Heart left ventricle (tissue), 16 donors: ENCODE measurements at regions of chr2 and their contacts with region 1.

Region 1: DNA sequence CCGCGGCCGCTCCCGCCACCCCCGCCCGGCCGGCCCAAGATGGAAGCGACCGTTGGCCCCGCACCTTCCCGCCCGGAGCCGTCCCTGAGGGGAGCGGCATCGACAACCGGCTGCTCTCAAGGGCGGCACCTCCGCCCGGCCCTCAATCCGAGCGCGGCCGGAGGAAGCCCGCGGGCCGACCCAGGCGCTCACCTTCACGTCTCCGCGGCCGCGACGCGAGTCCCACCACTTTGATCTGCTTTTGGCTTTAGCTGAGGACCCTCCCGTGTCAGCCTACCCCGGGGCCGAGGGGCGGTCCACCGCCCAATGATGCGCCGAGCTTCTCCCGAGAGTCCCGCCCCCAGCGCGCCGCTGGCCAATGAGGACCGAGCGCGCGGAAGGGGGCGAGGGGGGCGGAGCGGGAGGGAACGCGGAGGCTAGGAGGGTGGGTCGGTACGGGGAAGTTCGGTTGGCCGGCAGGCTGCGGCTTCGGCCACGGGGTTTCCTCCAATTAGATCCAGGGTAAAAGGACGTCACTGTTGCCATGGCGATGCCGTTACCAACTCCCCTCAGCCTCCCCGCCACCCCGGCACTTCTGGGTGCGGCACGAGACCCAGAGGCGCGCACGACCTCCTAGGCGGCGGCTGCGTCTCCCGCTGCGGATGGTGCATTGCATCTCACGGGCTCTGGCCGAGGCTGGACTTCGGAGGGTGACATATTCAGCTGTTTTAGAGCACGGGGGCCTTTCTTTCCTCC is at the start of gene YWHAQ:
- DNase-seq: peak; percentile 99
- ATAC-seq: peak; percentile 95 to 98 (median 96)
- H3K4me3 ChIP-seq: peak within 1 kb of the TSS; percentile 41 to 94 (median 79)
- H3K27ac ChIP-seq: peak within 1 kb of the TSS; percentile 72 to 99 (median 96)
- H3K4me1 ChIP-seq: peaks cover 0 to 60% (median 49%) of the 10 kb centered on the region in 12 donors
- H3K27me3 ChIP-seq: no peaks in the 10 kb centered on the region
- CTCF ChIP-seq: no peak
- POLR2A ChIP-seq: peak; percentile 89 to 98
- total RNA-seq, gene YWHAQ: 169 to 310 (median 213) TPM

Region 2: DNA sequence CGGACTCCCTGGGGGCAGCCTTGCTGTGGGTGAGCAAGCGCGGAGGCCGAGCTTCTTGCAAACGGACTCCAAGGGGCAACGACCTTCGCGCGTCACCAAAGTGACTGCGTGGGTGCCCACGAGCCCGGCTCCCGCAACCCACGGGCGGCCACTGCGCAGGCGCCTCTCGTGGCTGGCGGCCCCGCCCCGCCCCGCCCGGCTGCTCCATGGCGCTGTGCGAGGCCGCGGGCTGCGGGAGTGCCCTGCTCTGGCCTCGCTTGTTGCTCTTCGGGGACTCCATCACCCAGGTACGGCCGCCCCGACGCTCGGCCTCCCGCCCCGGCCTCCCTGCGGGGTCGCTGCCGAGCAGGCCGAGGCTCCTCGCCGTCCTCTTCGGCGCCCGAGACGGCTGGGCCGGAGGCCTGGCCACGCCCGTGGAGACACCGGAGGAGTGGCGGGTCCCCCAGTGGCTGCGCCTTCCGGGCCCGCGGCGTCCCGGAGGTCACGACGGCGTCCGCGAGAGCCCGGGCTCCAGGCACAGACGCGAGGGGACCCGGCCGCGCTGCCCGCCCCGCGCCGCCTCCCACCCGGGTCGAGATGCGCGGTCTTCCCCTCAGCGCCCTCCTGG is 156.5 kb before region 1 on chr2 and contains the start of gene IAH1:
- intact Hi-C with region 1: loop called in 1 of 10 experiments (anchors 10 kb)
- DNase-seq: peak; percentile 60 to 86 (median 75)
- ATAC-seq: peak; percentile 57 to 93 (median 82)
- H3K4me3 ChIP-seq: peak within 1 kb of the TSS; percentile 59 to 93 (median 82)
- H3K27ac ChIP-seq: peak within 1 kb of the TSS; percentile 52 to 93 (median 84)
- H3K4me1 ChIP-seq: peaks cover 0 to 42% (median 32%) of the 10 kb centered on the region in 12 donors
- H3K27me3 ChIP-seq: no peaks in the 10 kb centered on the region
- CTCF ChIP-seq: peak in 2 of 12 donors; percentile 11 to 12
- POLR2A ChIP-seq: peak in 1 of 2 donors; percentile 65
- total RNA-seq, gene IAH1: 58.4 to 101 (median 78.0) TPM

Region 3: DNA sequence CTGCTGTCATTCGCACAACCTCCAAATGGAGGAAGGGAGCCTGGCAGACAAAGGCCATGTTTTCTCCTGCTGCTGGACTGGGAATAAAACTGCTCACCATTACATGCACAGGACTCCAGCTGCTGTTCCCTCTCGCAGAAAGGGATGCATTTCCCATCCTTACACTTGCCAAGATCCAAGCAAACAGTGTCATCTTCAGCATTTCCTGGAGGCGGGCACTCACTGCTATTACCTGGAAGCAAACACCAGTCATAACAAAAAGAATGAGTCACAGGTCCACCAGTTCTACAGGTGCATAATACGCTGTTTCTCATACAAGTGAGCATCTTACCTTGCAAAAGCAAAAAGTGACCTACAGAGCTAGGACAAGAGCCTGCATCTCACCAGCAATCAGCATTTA is 133.9 kb before region 1 on chr2:
- intact Hi-C with region 1: no loop called
- DNase-seq: no peak
- ATAC-seq: no peak
- H3K4me3 ChIP-seq: no peak overlapping the region
- H3K27ac ChIP-seq: no peak overlapping the region
- H3K4me1 ChIP-seq: peaks cover 0 to 8% (median 2%) of the 10 kb centered on the region in 12 donors
- H3K27me3 ChIP-seq: no peaks in the 10 kb centered on the region
- CTCF ChIP-seq: no peak
- POLR2A ChIP-seq: no peak

Region 4: GRCh38 chr2:9594366-9595054 is 36.4 kb before region 1 on chr2:
- intact Hi-C with region 1: no loop called
- DNase-seq: no peak
- ATAC-seq: peak; percentile 63 to 94 (median 92)
- H3K4me3 ChIP-seq: no peak overlapping the region
- H3K27ac ChIP-seq: peak overlapping the region in 5 of 12 donors; percentile 10 to 65 (median 25)
- H3K4me1 ChIP-seq: peaks cover 0 to 49% (median 38%) of the 10 kb centered on the region in 12 donors
- H3K27me3 ChIP-seq: no peaks in the 10 kb centered on the region
- CTCF ChIP-seq: no peak
- POLR2A ChIP-seq: no peak

Region 5: DNA sequence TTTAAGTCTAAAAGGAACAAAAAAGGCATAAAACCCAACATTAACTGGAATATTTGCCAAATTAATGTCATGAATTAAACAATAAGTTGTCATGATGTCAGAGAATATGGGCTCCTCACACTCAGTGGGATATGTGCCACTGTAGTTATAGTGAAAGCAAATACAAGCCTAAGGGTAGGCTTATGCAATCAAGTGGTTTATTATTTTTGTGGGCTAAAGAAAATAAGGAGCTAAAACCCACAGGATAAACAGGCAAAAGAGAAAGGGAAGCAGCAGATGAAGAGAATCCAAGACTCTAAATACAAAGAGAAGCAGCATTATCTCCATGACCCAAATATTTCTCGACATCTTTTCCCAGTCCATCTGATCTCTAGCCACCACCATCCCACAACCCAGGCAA is 17.6 kb before region 1 on chr2:
- intact Hi-C with region 1: loop called in 1 of 10 experiments (anchors 2 kb)
- DNase-seq: no peak
- ATAC-seq: peak in 3 of 4 donors; percentile 29 to 44 (median 31)
- H3K4me3 ChIP-seq: no peak overlapping the region
- H3K27ac ChIP-seq: peak overlapping the region in 2 of 12 donors; percentile 31 to 41
- H3K4me1 ChIP-seq: peaks cover 0 to 92% (median 70%) of the 10 kb centered on the region in 12 donors
- H3K27me3 ChIP-seq: no peaks in the 10 kb centered on the region
- CTCF ChIP-seq: no peak
- POLR2A ChIP-seq: no peak

Region 6: DNA sequence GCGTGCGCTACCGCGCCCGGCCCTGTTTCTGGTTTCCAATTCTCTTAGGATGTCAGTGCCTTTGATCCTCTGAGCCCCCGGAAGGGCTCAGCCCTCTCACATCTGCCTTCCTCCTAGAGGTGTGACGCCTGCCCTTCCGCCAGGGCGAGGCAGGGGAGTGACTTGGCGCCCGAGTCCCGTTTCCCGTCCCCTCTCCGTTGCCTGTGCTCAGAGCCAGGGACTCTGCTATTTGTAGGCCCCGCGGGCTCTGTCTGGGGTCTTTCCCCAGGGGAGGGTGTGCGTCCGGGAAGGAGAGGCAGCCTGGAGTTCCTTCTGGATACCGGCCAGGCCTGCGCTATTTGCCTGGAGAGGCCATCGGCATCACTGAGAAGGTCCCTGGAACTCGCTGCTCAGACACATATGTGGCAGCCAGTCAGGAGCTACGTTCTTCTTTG is 108.6 kb after region 1 on chr2:
- intact Hi-C with region 1: loop called in 2 of 10 experiments (anchors 2 to 5 kb)
- DNase-seq: peak; percentile 90 to 93 (median 90)
- ATAC-seq: peak; percentile 71 to 94 (median 86)
- H3K4me3 ChIP-seq: peak overlapping the region in 10 of 12 donors; percentile 23 to 53 (median 44)
- H3K27ac ChIP-seq: peak overlapping the region; percentile 35 to 94 (median 86)
- H3K4me1 ChIP-seq: peaks cover 0 to 33% (median 24%) of the 10 kb centered on the region in 12 donors
- H3K27me3 ChIP-seq: no peaks in the 10 kb centered on the region
- CTCF ChIP-seq: peak in 1 of 12 donors; percentile 8
- POLR2A ChIP-seq: no peak

Region 7: DNA sequence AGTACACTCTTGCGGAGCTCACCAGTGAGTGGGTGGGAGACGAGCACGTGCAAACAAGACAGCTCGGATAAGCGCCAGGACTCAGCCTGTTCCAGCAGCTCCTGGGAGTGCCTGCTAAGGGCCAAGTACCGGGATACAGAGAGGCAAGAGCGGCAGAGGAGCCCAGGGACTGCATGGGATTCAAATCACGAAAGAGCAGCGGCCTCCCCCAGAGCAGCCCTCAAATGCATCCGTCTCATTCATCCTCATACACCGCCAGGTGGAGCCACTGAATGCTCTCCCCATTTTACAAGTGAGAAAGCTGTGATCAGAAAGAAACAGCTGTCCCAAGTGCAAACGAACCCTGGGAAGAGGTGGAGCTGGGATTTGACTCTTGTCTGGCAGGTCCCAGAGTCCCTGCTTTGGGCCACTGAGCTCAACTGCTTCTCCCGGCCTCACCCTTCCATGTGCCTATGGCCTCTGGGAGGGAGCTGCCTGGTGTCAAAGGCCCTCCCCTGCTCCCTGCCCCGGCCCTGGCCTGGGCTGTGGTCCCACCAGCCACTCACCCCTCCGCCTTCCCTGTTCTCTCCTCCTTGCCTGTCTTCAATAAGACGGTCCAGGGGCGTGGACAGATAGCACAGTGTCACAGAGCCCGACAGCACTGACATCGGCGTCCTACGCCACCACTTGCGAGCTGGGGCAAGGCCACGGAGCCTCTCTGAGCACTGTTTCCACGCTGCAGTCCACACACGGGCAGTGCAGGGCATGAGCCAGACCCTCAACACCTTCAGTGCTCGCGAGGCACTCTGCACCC is 139.6 kb after region 1 on chr2:
- intact Hi-C with region 1: loop called in 3 of 10 experiments (anchors 10 kb)
- DNase-seq: peak; percentile 65 to 84 (median 70)
- ATAC-seq: peak; percentile 38 to 60 (median 48)
- H3K4me3 ChIP-seq: peak overlapping the region in 4 of 12 donors; percentile 14 to 28 (median 20)
- H3K27ac ChIP-seq: peak overlapping the region in 10 of 12 donors; percentile 11 to 78 (median 74)
- H3K4me1 ChIP-seq: peaks cover 0 to 56% (median 23%) of the 10 kb centered on the region in 12 donors
- H3K27me3 ChIP-seq: no peaks in the 10 kb centered on the region
- CTCF ChIP-seq: peak; percentile 56 to 80 (median 72)
- POLR2A ChIP-seq: no peak